Calu3 (cell line): ENCODE measurements at regions of chr16 and their contacts with region 1.

Region 1: GRCh38 chr16:15620796-15621195 is 22.2 kb downstream of the MARF1 start:
- DNase-seq: no peak
- H3K4me3 Mint-ChIP-seq: no peak overlapping the region
- H3K27ac Mint-ChIP-seq: no peak overlapping the region
- H3K4me1 Mint-ChIP-seq: no peaks in the 10 kb centered on the region
- H3K27me3 Mint-ChIP-seq: no peaks in the 10 kb centered on the region
- CTCF ChIP-seq: no peak

Region 2: GRCh38 chr16:15682105-15682570 is 61.3 kb after region 1 on chr16:
- CTCF ChIA-PET with region 1: no interaction called
- intact Hi-C with region 1: loop called (anchors 10 kb)
- DNase-seq: peak; percentile 69
- H3K4me3 Mint-ChIP-seq: no peak overlapping the region
- H3K27ac Mint-ChIP-seq: peak overlapping the region; percentile 30
- H3K4me1 Mint-ChIP-seq: no peaks in the 10 kb centered on the region
- H3K27me3 Mint-ChIP-seq: no peaks in the 10 kb centered on the region
- CTCF ChIP-seq: peak; percentile 53